CD4-positive, alpha-beta T cell (primary cell): ENCODE measurements at regions of chr2 and their contacts with region 1.

Region 1: DNA sequence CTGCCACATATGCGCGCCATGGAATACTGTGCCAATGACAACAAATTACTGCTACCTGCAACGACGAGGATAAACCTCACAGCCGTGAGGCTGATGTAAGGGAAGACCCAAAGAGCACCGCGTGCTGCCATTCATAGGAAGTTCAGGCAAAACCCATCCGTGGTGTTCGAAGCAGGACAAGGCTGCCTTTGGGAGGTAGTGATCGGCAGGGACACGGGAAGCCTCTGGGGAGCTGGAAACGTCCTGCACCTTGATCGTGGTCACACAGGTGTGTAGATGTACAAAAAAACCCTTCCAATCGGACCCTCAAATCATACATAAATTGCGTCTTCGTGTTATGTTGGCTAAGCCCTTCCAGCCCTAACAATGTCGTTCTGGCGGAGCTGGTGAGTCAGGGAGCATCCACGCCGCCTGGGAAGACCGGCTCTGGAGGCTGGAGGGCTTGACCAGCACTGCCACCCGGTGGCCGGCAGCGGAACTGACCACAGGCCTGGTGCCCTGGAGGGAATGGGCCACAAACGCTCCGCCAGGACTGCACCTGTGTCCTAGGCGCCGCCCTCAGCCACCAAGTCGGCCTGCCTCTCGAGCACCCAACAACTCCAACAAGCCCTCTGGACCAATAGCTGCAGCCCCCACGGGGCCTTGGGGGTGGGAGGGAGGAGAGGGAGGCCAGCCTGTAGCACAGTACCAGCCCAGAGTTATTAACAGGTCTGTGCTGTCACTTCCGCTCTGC is 4.1 kb upstream of the NEURL3 start:
- DNase-seq: peak in 12 of 14 experiments; percentile 26 to 75 (median 42)
- ATAC-seq: no peak
- H3K4me3 ChIP-seq: no peak overlapping the region
- H3K4me3 Mint-ChIP-seq: peak overlapping the region; percentile 6
- H3K27ac ChIP-seq: no peak overlapping the region
- H3K27ac Mint-ChIP-seq: no peak overlapping the region
- H3K4me1 ChIP-seq: peaks cover 20% of the 10 kb centered on the region
- H3K4me1 Mint-ChIP-seq: peaks cover 18% of the 10 kb centered on the region
- H3K27me3 ChIP-seq: peaks cover 5 to 11% of the 10 kb centered on the region in 2 experiments
- H3K27me3 Mint-ChIP-seq: peaks cover 22% of the 10 kb centered on the region
- CTCF ChIP-seq: peak; percentile 64

Region 2: DNA sequence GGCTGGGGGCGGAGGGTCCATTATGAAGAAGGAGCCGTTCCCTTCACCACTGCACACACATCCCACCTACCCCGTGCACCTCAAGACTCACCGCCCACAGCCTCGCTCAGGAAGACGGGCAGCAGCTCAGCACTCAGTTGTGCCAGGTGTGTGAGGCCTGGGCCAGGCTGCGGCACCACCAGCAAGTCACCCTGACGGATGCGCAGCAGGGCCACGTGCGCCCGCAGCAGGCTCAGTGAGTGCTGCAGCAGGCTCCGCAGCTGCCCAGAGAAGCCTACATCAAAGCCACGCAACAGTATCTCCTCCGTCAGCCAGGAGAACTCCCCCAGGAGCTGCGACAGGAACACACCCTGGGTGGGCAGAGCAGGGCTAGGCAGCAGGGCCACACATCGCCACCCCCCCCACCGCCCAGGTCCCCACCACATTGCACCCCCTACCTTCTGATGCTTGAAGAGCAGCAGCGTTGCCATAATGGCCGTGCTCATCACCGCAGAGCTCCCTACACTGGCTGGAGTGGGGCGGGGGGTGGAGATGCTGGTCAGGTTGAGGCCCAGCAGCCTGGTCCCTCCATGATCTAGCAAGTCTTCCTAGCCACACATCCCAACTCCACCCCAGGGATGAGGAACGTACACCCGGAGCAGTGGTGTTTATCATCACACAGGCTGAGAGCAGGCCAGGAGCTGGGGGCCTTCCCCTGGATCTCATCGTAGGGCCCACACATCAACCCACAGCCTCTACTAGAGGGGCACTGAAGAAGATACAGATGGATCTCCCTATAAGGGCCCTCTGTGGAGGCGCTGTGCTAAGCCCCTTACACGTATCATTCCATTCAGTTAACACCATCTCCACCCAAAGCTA is 484.7 kb before region 1 on chr2:
- CTCF ChIA-PET with region 1: no interaction called
- POLR2A ChIA-PET with region 1: no interaction called
- intact Hi-C with region 1: loop called in 1 of 2 experiments (anchors 10 kb)
- DNase-seq: peak in 1 of 14 experiments; percentile 11
- ATAC-seq: no peak
- H3K4me3 ChIP-seq: no peak overlapping the region
- H3K4me3 Mint-ChIP-seq: no peak overlapping the region
- H3K27ac ChIP-seq: no peak overlapping the region
- H3K27ac Mint-ChIP-seq: no peak overlapping the region
- H3K4me1 ChIP-seq: peaks cover 3% of the 10 kb centered on the region
- H3K4me1 Mint-ChIP-seq: peaks cover 3% of the 10 kb centered on the region
- H3K27me3 ChIP-seq: no peaks in the 10 kb centered on the region
- H3K27me3 Mint-ChIP-seq: no peaks in the 10 kb centered on the region
- CTCF ChIP-seq: no peak

Region 3: DNA sequence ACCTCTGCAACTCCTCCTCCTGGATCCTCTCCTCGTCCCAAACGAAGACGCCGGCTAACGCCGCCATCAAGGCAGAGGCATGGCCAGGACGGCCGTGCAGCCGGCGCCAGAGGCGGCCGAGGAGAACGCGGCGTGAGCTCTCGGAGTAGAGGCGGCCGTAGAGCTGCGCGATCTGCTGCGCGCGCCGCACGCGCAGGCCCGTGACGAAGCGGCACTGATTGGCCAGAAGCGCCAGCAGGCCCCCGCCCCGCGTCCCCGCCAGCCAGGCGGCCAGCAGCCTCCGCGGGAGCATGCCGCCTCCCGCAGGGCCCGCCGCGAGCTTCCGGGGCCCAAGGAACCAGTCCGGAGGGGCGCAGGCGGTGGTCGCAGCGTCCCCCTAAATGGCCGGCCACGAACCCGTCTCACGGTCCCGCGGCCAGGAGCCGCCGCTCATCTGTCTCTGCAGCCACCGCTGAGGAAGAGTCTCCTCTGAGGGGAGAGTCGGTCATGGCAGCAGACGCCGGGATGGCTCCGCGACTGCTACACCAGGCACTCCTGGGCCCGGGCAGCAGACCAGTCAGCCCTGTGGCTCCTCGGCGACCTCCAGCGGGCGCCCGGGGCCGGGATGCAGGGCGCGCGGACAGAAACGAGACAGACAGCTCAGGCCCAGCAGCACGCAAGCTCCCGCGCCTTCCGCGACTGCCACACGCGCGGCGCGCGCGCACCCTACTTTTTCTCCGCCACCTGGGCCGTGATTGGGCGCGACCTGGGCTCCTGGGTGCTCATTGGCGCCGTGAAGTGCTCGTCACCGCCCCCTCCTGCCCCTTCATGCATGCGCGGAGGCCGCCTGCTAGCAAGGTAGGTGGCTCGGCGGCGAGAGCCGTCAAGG is 300.9 kb before region 1 on chr2 and contains the start of gene STARD7:
- CTCF ChIA-PET with region 1: no interaction called
- POLR2A ChIA-PET with region 1: no interaction called
- intact Hi-C with region 1: loop called (anchors 2 to 5 kb)
- DNase-seq: peak; percentile 94 to 98 (median 96)
- ATAC-seq: peak; percentile 87
- H3K4me3 ChIP-seq: peak within 1 kb of the TSS; percentile 85
- H3K4me3 Mint-ChIP-seq: peak within 1 kb of the TSS; percentile 96
- H3K27ac ChIP-seq: peak within 1 kb of the TSS; percentile 57 to 87
- H3K27ac Mint-ChIP-seq: peak within 1 kb of the TSS; percentile 89
- H3K4me1 ChIP-seq: peaks cover 49% of the 10 kb centered on the region
- H3K4me1 Mint-ChIP-seq: peaks cover 57% of the 10 kb centered on the region
- H3K27me3 ChIP-seq: no peaks in the 10 kb centered on the region
- H3K27me3 Mint-ChIP-seq: no peaks in the 10 kb centered on the region
- CTCF ChIP-seq: peak; percentile 17
- total RNA-seq, gene STARD7: 57.4 to 58.6 TPM

Region 4: GRCh38 chr2:96359310-96359709 is 150.0 kb before region 1 on chr2:
- CTCF ChIA-PET with region 1: no interaction called
- POLR2A ChIA-PET with region 1: no interaction called
- intact Hi-C with region 1: loop called (anchors 1 kb)
- DNase-seq: peak; percentile 29 to 67 (median 47)
- ATAC-seq: peak; percentile 64
- H3K4me3 ChIP-seq: no peak overlapping the region
- H3K4me3 Mint-ChIP-seq: no peak overlapping the region
- H3K27ac ChIP-seq: no peak overlapping the region
- H3K27ac Mint-ChIP-seq: peak overlapping the region; percentile 84
- H3K4me1 ChIP-seq: peaks cover 10% of the 10 kb centered on the region
- H3K4me1 Mint-ChIP-seq: peaks cover 15% of the 10 kb centered on the region
- H3K27me3 ChIP-seq: no peaks in the 10 kb centered on the region
- H3K27me3 Mint-ChIP-seq: no peaks in the 10 kb centered on the region
- CTCF ChIP-seq: peak; percentile 65

Region 5: DNA sequence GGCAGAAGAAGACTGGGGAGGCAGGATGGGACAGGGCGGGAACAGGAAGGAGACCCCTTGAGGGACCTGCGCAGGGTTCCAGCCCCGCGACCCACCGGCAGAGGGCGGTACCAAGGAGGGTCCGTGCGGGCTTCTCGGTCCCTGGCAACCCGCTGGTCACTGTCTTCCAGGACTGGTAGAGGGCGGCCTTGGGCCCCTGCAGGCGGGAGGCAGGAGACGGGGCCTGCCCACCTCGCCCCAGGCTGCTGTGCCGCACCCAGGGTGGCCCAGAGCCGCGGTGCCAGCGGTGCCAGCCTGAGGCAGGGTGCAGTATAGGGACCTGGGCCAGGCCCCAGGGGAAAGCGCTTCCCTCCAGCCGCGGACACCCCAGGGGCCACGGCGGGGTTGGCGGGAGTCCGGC is 38.6 kb before region 1 on chr2:
- CTCF ChIA-PET with region 1: no interaction called
- POLR2A ChIA-PET with region 1: no interaction called
- intact Hi-C with region 1: loop called (anchors 1 to 5 kb)
- DNase-seq: peak; percentile 21 to 70 (median 38)
- ATAC-seq: peak; percentile 69
- H3K4me3 ChIP-seq: no peak overlapping the region
- H3K4me3 Mint-ChIP-seq: no peak overlapping the region
- H3K27ac ChIP-seq: no peak overlapping the region
- H3K27ac Mint-ChIP-seq: no peak overlapping the region
- H3K4me1 ChIP-seq: peaks cover 6% of the 10 kb centered on the region
- H3K4me1 Mint-ChIP-seq: no peaks in the 10 kb centered on the region
- H3K27me3 ChIP-seq: peaks cover 0 to 6% of the 10 kb centered on the region in 2 experiments
- H3K27me3 Mint-ChIP-seq: peaks cover 7% of the 10 kb centered on the region
- CTCF ChIP-seq: peak; percentile 63

Region 6: GRCh38 chr2:97688062-97688827 is 1179.0 kb after region 1 on chr2:
- CTCF ChIA-PET with region 1: no interaction called
- POLR2A ChIA-PET with region 1: no interaction called
- intact Hi-C with region 1: no loop called
- DNase-seq: no peak
- ATAC-seq: no peak
- H3K4me3 ChIP-seq: no peak overlapping the region
- H3K4me3 Mint-ChIP-seq: no peak overlapping the region
- H3K27ac ChIP-seq: no peak overlapping the region
- H3K27ac Mint-ChIP-seq: no peak overlapping the region
- H3K4me1 ChIP-seq: no peaks in the 10 kb centered on the region
- H3K4me1 Mint-ChIP-seq: no peaks in the 10 kb centered on the region
- H3K27me3 ChIP-seq: no peaks in the 10 kb centered on the region
- H3K27me3 Mint-ChIP-seq: no peaks in the 10 kb centered on the region
- CTCF ChIP-seq: no peak